ENCODE measurements at regions of chr16 and their contacts with region 1.

Region 1: DNA sequence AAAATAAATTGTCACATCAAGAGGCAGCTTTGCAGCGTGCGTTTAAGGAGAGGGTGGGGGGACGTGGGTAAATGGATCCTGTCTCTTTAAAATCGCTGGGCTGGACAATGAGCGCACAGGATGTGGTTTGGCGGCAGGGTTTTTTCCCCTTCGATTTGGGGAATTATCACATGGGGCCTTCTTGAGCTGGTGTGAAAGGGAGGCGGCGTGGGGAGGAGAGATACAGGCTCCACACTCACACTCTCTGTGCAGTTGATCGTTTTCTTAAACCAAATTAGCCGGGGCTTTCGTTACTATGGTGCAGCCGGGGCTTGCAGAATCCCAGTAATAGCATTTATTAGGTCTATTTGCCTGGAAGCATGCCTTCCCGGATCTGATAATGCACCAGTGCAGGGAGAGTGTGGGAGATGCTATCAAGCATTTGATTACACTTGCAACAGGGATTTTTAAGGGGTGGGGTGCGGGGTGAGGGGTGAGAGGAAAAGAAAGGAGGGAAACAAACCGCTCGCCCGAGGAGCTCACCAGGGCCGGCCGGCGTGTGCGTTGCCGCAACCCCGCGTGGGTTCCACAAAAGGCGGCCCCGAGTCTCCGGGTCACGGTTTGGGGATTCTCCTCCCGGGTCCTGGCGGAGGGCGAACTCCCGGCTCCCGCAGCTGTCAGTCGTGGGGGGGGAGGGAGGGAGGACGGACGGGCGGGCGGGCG is 58.9 kb upstream of the GSE1 start:
- DNase-seq: peak; percentile 75
- H3K4me3 Mint-ChIP-seq: peak overlapping the region; percentile 90
- H3K27ac Mint-ChIP-seq: peak overlapping the region; percentile 95
- H3K4me1 Mint-ChIP-seq: peaks cover 34% of the 10 kb centered on the region
- H3K27me3 Mint-ChIP-seq: peaks cover 5% of the 10 kb centered on the region

Region 2: GRCh38 chr16:85055503-85056210 is 498.6 kb before region 1 on chr16:
- intact Hi-C with region 1: loop called (anchors 10 kb)
- DNase-seq: peak; percentile 75
- H3K4me3 Mint-ChIP-seq: peak overlapping the region; percentile 60
- H3K27ac Mint-ChIP-seq: peak overlapping the region; percentile 84
- H3K4me1 Mint-ChIP-seq: peaks cover 31% of the 10 kb centered on the region
- H3K27me3 Mint-ChIP-seq: peaks cover 10% of the 10 kb centered on the region

Region 3: GRCh38 chr16:85420501-85421337 is 133.5 kb before region 1 on chr16:
- intact Hi-C with region 1: loop called (anchors 1 kb)
- DNase-seq: peak; percentile 64
- H3K4me3 Mint-ChIP-seq: no peak overlapping the region
- H3K27ac Mint-ChIP-seq: no peak overlapping the region
- H3K4me1 Mint-ChIP-seq: no peaks in the 10 kb centered on the region
- H3K27me3 Mint-ChIP-seq: peaks cover 3% of the 10 kb centered on the region

Region 4: GRCh38 chr16:85570827-85571562 is 16.7 kb after region 1 on chr16:
- intact Hi-C with region 1: loop called (anchors 1 kb)
- DNase-seq: no peak
- H3K4me3 Mint-ChIP-seq: peak overlapping the region; percentile 45
- H3K27ac Mint-ChIP-seq: peak overlapping the region; percentile 4
- H3K4me1 Mint-ChIP-seq: peaks cover 45% of the 10 kb centered on the region
- H3K27me3 Mint-ChIP-seq: peaks cover 2% of the 10 kb centered on the region

Region 5: GRCh38 chr16:85688586-85689284 is 134.5 kb after region 1 on chr16 and contains the start of gene GINS2:
- intact Hi-C with region 1: loop called (anchors 1 kb)
- DNase-seq: peak; percentile 89
- H3K4me3 Mint-ChIP-seq: peak within 1 kb of the TSS; percentile 86
- H3K27ac Mint-ChIP-seq: peak within 1 kb of the TSS; percentile 86
- H3K4me1 Mint-ChIP-seq: peaks cover 8% of the 10 kb centered on the region
- H3K27me3 Mint-ChIP-seq: peaks cover 7% of the 10 kb centered on the region
- total RNA-seq, gene GINS2: 87.2 and 91.1 TPM in 2 replicates

Region 6: GRCh38 chr16:85995541-85996423 is 441.5 kb after region 1 on chr16:
- intact Hi-C with region 1: loop called (anchors 10 kb)
- DNase-seq: no peak
- H3K4me3 Mint-ChIP-seq: peak overlapping the region; percentile 43
- H3K27ac Mint-ChIP-seq: peak overlapping the region; percentile 13
- H3K4me1 Mint-ChIP-seq: peaks cover 35% of the 10 kb centered on the region
- H3K27me3 Mint-ChIP-seq: no peaks in the 10 kb centered on the region